Activated naive CD4-positive, alpha-beta T cell treated with anti-CD3 and anti-CD28 coated beads for 36 hours (primary cell): ENCODE measurements at regions of chr5 and their contacts with region 1.

Region 1: GRCh38 chr5:82225525-82226172 is 52.5 kb downstream of the RPS23 start:
- DNase-seq: peak; percentile 79
- H3K4me3 Mint-ChIP-seq: no peak overlapping the region
- H3K27ac Mint-ChIP-seq: no peak overlapping the region
- H3K4me1 Mint-ChIP-seq: peaks cover 3% of the 10 kb centered on the region
- H3K27me3 Mint-ChIP-seq: no peaks in the 10 kb centered on the region

Region 2: DNA sequence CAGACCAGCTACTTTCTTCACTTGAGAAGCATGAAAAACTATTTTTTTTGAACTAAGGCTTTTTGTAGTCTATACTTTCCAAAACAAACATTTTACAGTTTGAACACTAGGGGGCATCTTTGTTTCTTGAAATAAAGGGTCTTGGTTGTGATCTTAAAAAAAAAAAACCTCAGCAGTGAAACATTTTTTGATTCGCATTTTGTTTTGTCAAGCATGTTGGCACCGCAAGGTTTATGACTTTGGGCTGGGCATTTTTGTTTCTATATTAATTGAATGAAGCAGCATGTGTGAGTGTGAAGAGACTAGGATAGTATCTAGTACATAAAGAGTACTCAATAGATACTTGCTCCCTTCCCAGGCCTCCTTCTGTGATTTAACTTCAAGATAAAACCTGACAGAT is 800.1 kb before region 1 on chr5:
- CTCF ChIA-PET with region 1: interaction called, 8 read pairs
- intact Hi-C with region 1: loop called (anchors 1 kb)
- DNase-seq: peak; percentile 7
- H3K4me3 Mint-ChIP-seq: no peak overlapping the region
- H3K27ac Mint-ChIP-seq: peak overlapping the region; percentile 8
- H3K4me1 Mint-ChIP-seq: peaks cover 16% of the 10 kb centered on the region
- H3K27me3 Mint-ChIP-seq: no peaks in the 10 kb centered on the region

Region 3: DNA sequence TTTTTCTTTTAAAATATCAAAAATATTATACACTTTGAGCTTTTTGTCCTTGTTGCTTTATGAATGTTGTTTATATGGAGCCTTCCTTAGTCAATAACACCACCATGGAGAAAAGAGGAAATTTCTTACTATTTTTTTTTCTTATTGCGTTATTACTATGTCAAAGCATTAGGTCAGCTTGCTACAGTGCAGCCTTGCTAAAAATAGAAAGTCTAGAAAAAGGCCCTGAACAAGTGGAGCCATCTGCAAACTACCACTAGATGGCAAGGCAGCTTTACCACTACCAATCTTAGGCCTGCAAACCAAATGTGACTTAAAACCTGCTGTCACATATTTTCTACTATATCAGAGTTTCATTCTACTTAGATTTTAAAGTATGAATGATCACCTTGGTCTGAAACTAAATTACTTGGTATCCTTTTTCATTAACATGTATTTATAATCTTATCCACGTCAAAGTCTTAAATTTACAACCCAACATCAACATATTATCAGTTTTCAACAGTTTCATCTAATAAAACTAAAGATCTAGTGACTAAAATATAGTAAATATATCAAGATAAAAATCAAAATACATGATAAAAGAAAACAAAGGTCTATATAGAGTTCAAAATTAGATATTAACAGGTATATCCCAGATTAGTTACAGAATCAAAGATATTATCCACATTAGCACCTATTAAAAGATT is 718.6 kb before region 1 on chr5:
- CTCF ChIA-PET with region 1: interaction called, 10 read pairs
- intact Hi-C with region 1: loop called (anchors 1 kb)
- DNase-seq: peak; percentile 62
- H3K4me3 Mint-ChIP-seq: no peak overlapping the region
- H3K27ac Mint-ChIP-seq: no peak overlapping the region
- H3K4me1 Mint-ChIP-seq: no peaks in the 10 kb centered on the region
- H3K27me3 Mint-ChIP-seq: no peaks in the 10 kb centered on the region

Region 4: DNA sequence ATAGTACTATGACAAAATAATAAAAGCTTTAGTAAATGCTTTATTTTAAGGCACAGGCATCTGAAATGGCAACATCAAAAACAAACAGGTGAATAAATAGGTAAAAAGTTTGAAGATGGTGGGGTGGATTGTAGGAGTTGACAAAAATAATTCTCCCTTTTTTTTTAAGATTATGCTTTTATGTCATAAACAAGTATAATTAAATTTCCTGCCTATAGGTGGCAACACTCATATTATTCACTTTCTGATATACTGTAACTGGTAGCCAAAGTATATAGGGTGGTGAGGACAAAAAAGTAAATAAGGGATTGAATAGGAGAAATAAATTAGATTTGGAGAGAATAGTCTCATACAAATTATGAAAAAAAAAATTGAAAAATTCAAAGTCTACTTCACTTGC is 711.7 kb before region 1 on chr5:
- CTCF ChIA-PET with region 1: interaction called, 10 read pairs
- intact Hi-C with region 1: loop called (anchors 2 kb)
- DNase-seq: no peak
- H3K4me3 Mint-ChIP-seq: no peak overlapping the region
- H3K27ac Mint-ChIP-seq: no peak overlapping the region
- H3K4me1 Mint-ChIP-seq: no peaks in the 10 kb centered on the region
- H3K27me3 Mint-ChIP-seq: no peaks in the 10 kb centered on the region

Region 5: GRCh38 chr5:82107267-82107666 is 118.4 kb before region 1 on chr5:
- CTCF ChIA-PET with region 1: interaction called, 4 read pairs
- intact Hi-C with region 1: loop called (anchors 5 kb)
- DNase-seq: no peak
- H3K4me3 Mint-ChIP-seq: no peak overlapping the region
- H3K27ac Mint-ChIP-seq: no peak overlapping the region
- H3K4me1 Mint-ChIP-seq: peaks cover 15% of the 10 kb centered on the region
- H3K27me3 Mint-ChIP-seq: no peaks in the 10 kb centered on the region

Region 6: GRCh38 chr5:82174128-82174918 is 51.3 kb before region 1 on chr5:
- CTCF ChIA-PET with region 1: interaction called, 6 read pairs
- intact Hi-C with region 1: loop called (anchors 1 kb)
- DNase-seq: peak; percentile 82
- H3K4me3 Mint-ChIP-seq: no peak overlapping the region
- H3K27ac Mint-ChIP-seq: no peak overlapping the region
- H3K4me1 Mint-ChIP-seq: peaks cover 4% of the 10 kb centered on the region
- H3K27me3 Mint-ChIP-seq: no peaks in the 10 kb centered on the region

Region 7: DNA sequence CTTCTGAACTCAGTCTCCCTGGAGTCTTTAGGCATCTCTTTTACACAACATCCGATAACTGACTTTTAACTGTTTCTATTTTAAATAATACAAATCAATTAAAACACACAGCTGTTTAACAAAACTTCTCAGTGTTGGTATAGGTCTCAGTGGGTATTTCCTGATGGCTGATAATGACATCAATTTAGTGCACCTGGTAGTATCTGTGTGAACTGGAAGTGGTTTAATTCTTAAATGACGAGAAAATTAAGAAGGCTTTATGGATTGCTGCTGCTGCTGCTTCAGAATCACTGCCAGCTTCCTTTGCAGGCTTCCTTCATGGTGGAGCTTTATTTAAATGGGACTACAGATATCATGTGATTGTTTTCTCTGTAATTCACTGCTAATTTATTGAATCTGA is 39.8 kb before region 1 on chr5:
- CTCF ChIA-PET with region 1: no interaction called
- intact Hi-C with region 1: no loop called
- DNase-seq: no peak
- H3K4me3 Mint-ChIP-seq: no peak overlapping the region
- H3K27ac Mint-ChIP-seq: no peak overlapping the region
- H3K4me1 Mint-ChIP-seq: no peaks in the 10 kb centered on the region
- H3K27me3 Mint-ChIP-seq: no peaks in the 10 kb centered on the region